ENCODE measurements at regions of chr9 and their contacts with region 1.

Region 1: GRCh38 chr9:97575673-97576200 is 57.4 kb downstream of the TSTD2 start:
- DNase-seq: no peak
- H3K4me3 ChIP-seq: no peak overlapping the region
- H3K27ac ChIP-seq: no peak overlapping the region
- H3K4me1 ChIP-seq: no peaks in the 10 kb centered on the region
- H3K27me3 ChIP-seq: peaks cover 0 to 4% of the 10 kb centered on the region in 2 experiments
- CTCF ChIP-seq: no peak
- POLR2A ChIP-seq: no peak

Region 2: GRCh38 chr9:97786341-97786740 is 210.6 kb after region 1 on chr9:
- CTCF ChIA-PET with region 1: no interaction called
- POLR2A ChIA-PET with region 1: no interaction called
- dilution Hi-C with region 1: no loop called
- intact Hi-C with region 1: loop called (anchors 5 kb)
- DNase-seq: no peak
- H3K4me3 ChIP-seq: no peak overlapping the region
- H3K27ac ChIP-seq: no peak overlapping the region
- H3K4me1 ChIP-seq: no peaks in the 10 kb centered on the region
- H3K27me3 ChIP-seq: peaks cover 0 to 11% of the 10 kb centered on the region in 2 experiments
- CTCF ChIP-seq: no peak
- POLR2A ChIP-seq: no peak